T-cell (primary cell): ENCODE measurements at regions of chr6 and their contacts with region 1.

Region 1: GRCh38 chr6:49409951-49410542 is 53.0 kb downstream of the MMUT start:
- DNase-seq: peak in 32 of 35 experiments; percentile 2 to 67 (median 31)
- ATAC-seq: peak in 2 of 4 experiments; percentile 33 to 57
- H3K4me3 ChIP-seq: no peak overlapping the region
- H3K4me3 Mint-ChIP-seq: no peak overlapping the region
- H3K27ac ChIP-seq: no peak overlapping the region
- H3K27ac Mint-ChIP-seq: no peak overlapping the region
- H3K4me1 ChIP-seq: no peaks in the 10 kb centered on the region
- H3K4me1 Mint-ChIP-seq: no peaks in the 10 kb centered on the region
- H3K27me3 ChIP-seq: no peaks in the 10 kb centered on the region
- H3K27me3 Mint-ChIP-seq: peaks cover 11% of the 10 kb centered on the region in 2 donors

Region 2: GRCh38 chr6:49257549-49257948 is 152.5 kb before region 1 on chr6:
- CTCF ChIA-PET with region 1: no interaction called
- POLR2A ChIA-PET with region 1: no interaction called
- DNase-seq: no peak
- ATAC-seq: no peak
- H3K4me3 ChIP-seq: no peak overlapping the region
- H3K4me3 Mint-ChIP-seq: no peak overlapping the region
- H3K27ac ChIP-seq: no peak overlapping the region
- H3K27ac Mint-ChIP-seq: no peak overlapping the region
- H3K4me1 ChIP-seq: no peaks in the 10 kb centered on the region
- H3K4me1 Mint-ChIP-seq: no peaks in the 10 kb centered on the region
- H3K27me3 ChIP-seq: no peaks in the 10 kb centered on the region
- H3K27me3 Mint-ChIP-seq: no peaks in the 10 kb centered on the region

Region 3: GRCh38 chr6:49531774-49532569 is 121.9 kb after region 1 on chr6:
- CTCF ChIA-PET with region 1: interaction called, 3 to 11 read pairs
- POLR2A ChIA-PET with region 1: no interaction called
- DNase-seq: peak in 1 of 35 experiments; percentile 42
- ATAC-seq: peak in 3 of 4 experiments; percentile 33 to 77 (median 43)
- H3K4me3 ChIP-seq: no peak overlapping the region
- H3K4me3 Mint-ChIP-seq: no peak overlapping the region
- H3K27ac ChIP-seq: no peak overlapping the region
- H3K27ac Mint-ChIP-seq: no peak overlapping the region
- H3K4me1 ChIP-seq: no peaks in the 10 kb centered on the region
- H3K4me1 Mint-ChIP-seq: peaks cover 2 to 8% (median 4%) of the 10 kb centered on the region in 3 donors
- H3K27me3 ChIP-seq: no peaks in the 10 kb centered on the region
- H3K27me3 Mint-ChIP-seq: peaks cover 15 to 18% of the 10 kb centered on the region in 2 donors